Transverse colon (tissue), 4 donors: ENCODE measurements at regions of chr3 and their contacts with region 1.

Region 1: DNA sequence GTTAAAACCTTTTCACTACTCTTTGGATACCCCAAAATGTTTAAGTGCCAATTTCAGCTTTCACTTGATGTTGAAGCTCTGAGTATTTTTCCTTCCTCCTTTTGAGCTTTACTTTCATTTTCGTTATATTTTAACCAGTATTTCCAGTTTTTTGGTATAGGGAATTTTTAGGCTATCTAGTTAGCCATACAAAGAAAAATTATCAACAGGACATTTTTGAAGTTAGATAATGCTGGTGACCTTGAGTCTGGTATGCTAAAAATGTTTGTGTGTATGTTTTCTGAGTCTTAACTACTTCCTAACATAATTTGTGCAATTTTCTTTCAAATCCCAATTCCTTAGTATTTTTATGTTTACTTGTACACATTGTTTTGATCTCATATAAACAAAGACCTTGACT is 284.8 kb downstream of the OTOL1 start:
- DNase-seq: no peak
- H3K4me3 ChIP-seq: no peak overlapping the region
- H3K27ac ChIP-seq: no peak overlapping the region
- H3K4me1 ChIP-seq: no peaks in the 10 kb centered on the region
- H3K27me3 ChIP-seq: no peaks in the 10 kb centered on the region
- CTCF ChIP-seq: no peak
- EP300 ChIP-seq: no peak
- POLR2A ChIP-seq: no peak

Region 2: GRCh38 chr3:161925749-161926360 is 144.5 kb after region 1 on chr3:
- in situ Hi-C with region 1: no loop called
- intact Hi-C with region 1: loop called (anchors 5 kb)
- DNase-seq: no peak
- H3K4me3 ChIP-seq: no peak overlapping the region
- H3K27ac ChIP-seq: no peak overlapping the region
- H3K4me1 ChIP-seq: no peaks in the 10 kb centered on the region
- H3K27me3 ChIP-seq: no peaks in the 10 kb centered on the region
- CTCF ChIP-seq: no peak
- EP300 ChIP-seq: no peak
- POLR2A ChIP-seq: no peak